HCT116 (cell line): ENCODE measurements at regions of chrX and their contacts with region 1.

Region 1: DNA sequence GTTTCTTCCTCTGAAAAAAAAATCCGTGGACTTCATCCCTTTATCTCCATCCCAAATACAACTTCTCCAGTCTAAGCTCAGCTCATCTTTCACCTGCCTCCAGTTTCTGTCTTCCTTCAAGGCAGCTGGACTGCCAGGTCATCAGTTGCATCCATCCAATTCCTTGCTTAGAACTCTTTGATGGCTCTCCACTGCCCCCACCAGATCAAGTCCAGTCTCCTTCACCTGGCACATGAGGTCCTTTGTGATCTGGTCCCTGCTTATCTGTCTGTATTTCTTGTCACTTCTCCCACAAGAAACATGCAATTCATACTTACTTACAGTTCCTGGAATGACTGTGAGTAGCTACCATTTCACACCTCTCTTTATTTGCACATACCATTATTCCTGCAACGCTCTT is 33.8 kb downstream of the OTUD6A start:
- DNase-seq: peak; percentile 12
- ATAC-seq: peak; percentile 83
- H3K4me3 ChIP-seq: no peak overlapping the region
- H3K27ac ChIP-seq: no peak overlapping the region
- H3K4me1 ChIP-seq: no peaks in the 10 kb centered on the region
- H3K27me3 ChIP-seq: no peaks in the 10 kb centered on the region
- CTCF ChIP-seq: peak; percentile 28 to 40 (median 38); a peak in 5 of 6 replicates
- POLR2A ChIP-seq: no peak
- RAD21 ChIP-seq: peak; percentile 58

Region 2: DNA sequence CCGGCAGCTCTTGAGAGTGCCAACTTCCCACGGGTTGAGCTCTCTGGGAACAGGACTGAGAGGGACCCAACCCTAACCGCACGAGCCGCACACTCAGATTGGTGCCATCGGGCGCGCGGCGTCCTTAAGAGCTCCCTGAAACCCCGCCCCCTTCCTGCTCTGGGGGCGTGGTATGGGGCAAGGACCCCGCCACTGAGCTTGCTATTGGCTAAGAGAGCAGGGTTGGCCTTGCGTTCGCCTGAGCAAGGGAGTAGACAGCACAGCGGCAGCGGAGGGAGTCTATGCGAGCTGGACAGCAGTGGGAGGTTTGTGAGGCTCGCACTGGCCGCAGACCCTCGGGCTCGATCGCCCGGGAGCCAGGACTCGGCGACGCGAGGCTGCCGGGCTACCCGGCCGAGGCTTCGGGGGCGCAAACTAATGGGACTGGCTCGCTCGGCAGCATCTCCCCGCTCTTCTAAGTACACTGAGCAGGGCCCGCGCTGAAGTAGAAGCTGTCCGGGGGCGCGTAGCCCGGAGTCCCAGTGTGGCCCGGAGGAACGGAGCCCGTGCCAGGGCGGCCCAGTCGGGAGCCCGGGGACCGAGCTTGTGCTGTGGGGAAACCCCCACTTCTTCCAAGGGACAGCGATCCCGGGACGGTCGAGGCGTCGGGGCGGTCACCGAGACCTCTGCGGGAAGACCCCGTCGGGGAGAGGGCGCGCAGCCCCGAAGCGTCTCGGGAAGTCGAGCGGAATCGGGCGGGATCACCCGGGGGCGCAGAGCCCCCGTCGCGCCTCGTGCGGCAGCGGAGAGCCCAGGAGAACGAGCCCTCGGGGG is 1267.1 kb before region 1 on chrX and contains the start of gene EFNB1:
- CTCF ChIA-PET with region 1: no interaction called
- POLR2A ChIA-PET with region 1: no interaction called
- RAD21 ChIA-PET with region 1: no interaction called
- intact Hi-C with region 1: loop called (anchors 10 kb)
- DNase-seq: peak; percentile 88
- ATAC-seq: peak; percentile 83
- H3K4me3 ChIP-seq: peak within 1 kb of the TSS; percentile 61 to 72
- H3K27ac ChIP-seq: peak within 1 kb of the TSS; percentile 59; the same call in 1 of the 2 replicates
- H3K4me1 ChIP-seq: peaks cover 0 to 8% of the 10 kb centered on the region in 2 experiments; a peak in 1 of 4 replicates
- H3K27me3 ChIP-seq: no peaks in the 10 kb centered on the region
- CTCF ChIP-seq: no peak
- POLR2A ChIP-seq: peak; percentile 84
- RAD21 ChIP-seq: no peak
- total RNA-seq, gene EFNB1: 14.7 TPM

Region 3: GRCh38 chrX:69493193-69493592 is 602.9 kb before region 1 on chrX:
- CTCF ChIA-PET with region 1: interaction called, 31 read pairs
- POLR2A ChIA-PET with region 1: no interaction called
- RAD21 ChIA-PET with region 1: interaction called, 3 to 11 read pairs
- intact Hi-C with region 1: loop called (anchors 1 kb)
- DNase-seq: peak; percentile 33
- ATAC-seq: peak; percentile 85
- H3K4me3 ChIP-seq: no peak overlapping the region
- H3K27ac ChIP-seq: no peak overlapping the region
- H3K4me1 ChIP-seq: peaks cover 0 to 6% of the 10 kb centered on the region in 2 experiments; a peak in 1 of 4 replicates
- H3K27me3 ChIP-seq: peaks cover 9% of the 10 kb centered on the region; the same call in 1 of the 2 replicates
- CTCF ChIP-seq: peak; percentile 39 to 53 (median 49); a peak in 5 of 6 replicates
- POLR2A ChIP-seq: no peak
- RAD21 ChIP-seq: peak; percentile 75

Region 4: GRCh38 chrX:69538321-69538876 is 557.7 kb before region 1 on chrX:
- CTCF ChIA-PET with region 1: interaction called, 7 read pairs
- POLR2A ChIA-PET with region 1: no interaction called
- RAD21 ChIA-PET with region 1: no interaction called
- intact Hi-C with region 1: loop called (anchors 1 kb)
- DNase-seq: peak; percentile 29
- ATAC-seq: peak; percentile 98
- H3K4me3 ChIP-seq: no peak overlapping the region
- H3K27ac ChIP-seq: no peak overlapping the region
- H3K4me1 ChIP-seq: peaks cover 0 to 4% of the 10 kb centered on the region in 2 experiments; a peak in 1 of 4 replicates
- H3K27me3 ChIP-seq: no peaks in the 10 kb centered on the region
- CTCF ChIP-seq: peak; percentile 60 to 69 (median 64)
- POLR2A ChIP-seq: no peak
- RAD21 ChIP-seq: peak; percentile 90

Region 5: DNA sequence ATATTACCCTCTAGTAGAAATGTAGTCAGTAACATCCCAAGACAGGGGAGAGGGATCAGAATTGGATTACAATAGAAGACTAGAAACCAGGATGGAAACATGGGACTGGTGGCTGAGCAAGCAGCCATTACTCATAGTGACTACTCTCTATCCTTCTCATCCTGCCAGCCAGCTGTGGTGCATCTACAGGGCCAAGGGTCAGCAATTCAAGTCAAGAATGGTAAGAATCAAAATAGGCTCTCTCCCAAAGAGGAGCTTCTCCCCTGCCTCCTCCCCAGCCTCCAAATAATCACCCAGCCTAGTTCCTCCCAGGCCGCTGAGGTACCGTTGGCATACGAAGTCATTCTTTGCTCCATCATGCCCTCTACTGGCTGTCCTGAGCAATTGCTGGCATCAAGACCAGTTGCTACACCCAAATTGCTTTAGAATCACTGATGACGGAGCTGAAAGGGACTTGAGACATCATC is 65.7 kb before region 1 on chrX:
- CTCF ChIA-PET with region 1: interaction called, 20 read pairs
- POLR2A ChIA-PET with region 1: no interaction called
- RAD21 ChIA-PET with region 1: no interaction called
- intact Hi-C with region 1: loop called (anchors 2 kb)
- DNase-seq: peak; percentile 22
- ATAC-seq: peak; percentile 80
- H3K4me3 ChIP-seq: no peak overlapping the region
- H3K27ac ChIP-seq: no peak overlapping the region
- H3K4me1 ChIP-seq: peaks cover 2 to 10% of the 10 kb centered on the region in 2 experiments; a peak in 2 of 4 replicates
- H3K27me3 ChIP-seq: no peaks in the 10 kb centered on the region
- CTCF ChIP-seq: peak; percentile 38 to 72 (median 64); a peak in 5 of 6 replicates
- POLR2A ChIP-seq: no peak
- RAD21 ChIP-seq: peak; percentile 76